Heart right ventricle (tissue), 16 donors: ENCODE measurements at regions of chr1 and their contacts with region 1.

Region 1: GRCh38 chr1:86696522-86696921 is 7.9 kb upstream of the SH3GLB1 start:
- DNase-seq: no peak
- ATAC-seq: no peak
- H3K4me3 ChIP-seq: no peak overlapping the region
- H3K27ac ChIP-seq: no peak overlapping the region
- H3K4me1 ChIP-seq: no peaks in the 10 kb centered on the region
- H3K27me3 ChIP-seq: no peaks in the 10 kb centered on the region
- CTCF ChIP-seq: no peak

Region 2: DNA sequence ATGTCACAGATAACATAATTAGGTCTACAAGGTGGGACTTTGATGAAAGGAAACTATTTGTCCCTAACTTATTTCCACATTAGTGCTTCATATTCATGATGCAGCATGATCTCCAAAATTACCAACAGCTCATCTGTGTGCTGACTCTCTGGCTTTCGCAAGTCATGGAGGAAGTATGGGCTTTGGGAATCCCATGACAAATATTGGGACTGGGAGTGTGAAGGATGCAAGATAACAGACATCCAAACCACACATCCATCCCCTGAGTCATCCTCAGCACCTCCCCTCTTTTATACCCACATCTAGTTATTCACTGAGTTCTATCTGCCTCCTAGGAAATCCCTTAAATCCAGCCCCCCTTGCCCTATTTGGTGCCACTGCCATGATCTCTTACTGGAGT is 437.1 kb before region 1 on chr1:
- intact Hi-C with region 1: no loop called
- DNase-seq: no peak
- ATAC-seq: no peak
- H3K4me3 ChIP-seq: no peak overlapping the region
- H3K27ac ChIP-seq: no peak overlapping the region
- H3K4me1 ChIP-seq: no peaks in the 10 kb centered on the region
- H3K27me3 ChIP-seq: no peaks in the 10 kb centered on the region
- CTCF ChIP-seq: no peak

Region 3: GRCh38 chr1:86380257-86380861 is 316.2 kb before region 1 on chr1:
- intact Hi-C with region 1: loop called in 6 of 10 experiments (anchors 10 kb)
- DNase-seq: no peak
- ATAC-seq: peak in 5 of 8 donors; percentile 58 to 77 (median 65)
- H3K4me3 ChIP-seq: peak overlapping the region in 4 of 10 donors; percentile 10 to 43 (median 22)
- H3K27ac ChIP-seq: peak overlapping the region in 1 of 10 donors; percentile 31
- H3K4me1 ChIP-seq: peaks cover 0 to 23% (median 0%) of the 10 kb centered on the region in 9 donors
- H3K27me3 ChIP-seq: no peaks in the 10 kb centered on the region
- CTCF ChIP-seq: peak; percentile 39 to 94 (median 82)

Region 4: GRCh38 chr1:86487131-86487810 is 209.3 kb before region 1 on chr1:
- intact Hi-C with region 1: loop called in 1 of 10 experiments (anchors 10 kb)
- DNase-seq: peak; percentile 24 to 67
- ATAC-seq: peak; percentile 76 to 93 (median 86)
- H3K4me3 ChIP-seq: no peak overlapping the region
- H3K27ac ChIP-seq: peak overlapping the region in 8 of 10 donors; percentile 9 to 82 (median 61)
- H3K4me1 ChIP-seq: no peaks in the 10 kb centered on the region
- H3K27me3 ChIP-seq: no peaks in the 10 kb centered on the region
- CTCF ChIP-seq: no peak

Region 5: DNA sequence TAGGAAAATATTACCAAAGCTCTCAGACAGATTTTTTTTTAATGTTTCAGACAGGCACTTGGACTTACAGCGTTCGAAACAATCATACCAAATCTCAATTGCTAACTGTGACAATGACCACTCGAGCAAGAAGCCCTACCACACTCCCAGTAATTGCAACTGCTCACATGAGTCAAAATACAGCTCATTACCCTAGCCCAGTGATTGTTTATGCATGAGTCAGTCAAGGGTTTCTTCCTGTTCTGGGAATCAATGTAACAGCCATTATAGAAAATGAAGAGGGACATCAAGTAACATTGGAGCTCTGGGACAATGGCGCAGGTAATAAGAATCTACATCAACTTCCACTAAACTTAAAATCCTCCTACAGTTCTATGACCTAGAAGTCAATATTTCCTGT is 48.3 kb before region 1 on chr1:
- intact Hi-C with region 1: no loop called
- DNase-seq: no peak
- ATAC-seq: no peak
- H3K4me3 ChIP-seq: no peak overlapping the region
- H3K27ac ChIP-seq: no peak overlapping the region
- H3K4me1 ChIP-seq: no peaks in the 10 kb centered on the region
- H3K27me3 ChIP-seq: no peaks in the 10 kb centered on the region
- CTCF ChIP-seq: no peak